WTC11 (cell line): ENCODE measurements at regions of chr4 and their contacts with region 1.

Region 1: DNA sequence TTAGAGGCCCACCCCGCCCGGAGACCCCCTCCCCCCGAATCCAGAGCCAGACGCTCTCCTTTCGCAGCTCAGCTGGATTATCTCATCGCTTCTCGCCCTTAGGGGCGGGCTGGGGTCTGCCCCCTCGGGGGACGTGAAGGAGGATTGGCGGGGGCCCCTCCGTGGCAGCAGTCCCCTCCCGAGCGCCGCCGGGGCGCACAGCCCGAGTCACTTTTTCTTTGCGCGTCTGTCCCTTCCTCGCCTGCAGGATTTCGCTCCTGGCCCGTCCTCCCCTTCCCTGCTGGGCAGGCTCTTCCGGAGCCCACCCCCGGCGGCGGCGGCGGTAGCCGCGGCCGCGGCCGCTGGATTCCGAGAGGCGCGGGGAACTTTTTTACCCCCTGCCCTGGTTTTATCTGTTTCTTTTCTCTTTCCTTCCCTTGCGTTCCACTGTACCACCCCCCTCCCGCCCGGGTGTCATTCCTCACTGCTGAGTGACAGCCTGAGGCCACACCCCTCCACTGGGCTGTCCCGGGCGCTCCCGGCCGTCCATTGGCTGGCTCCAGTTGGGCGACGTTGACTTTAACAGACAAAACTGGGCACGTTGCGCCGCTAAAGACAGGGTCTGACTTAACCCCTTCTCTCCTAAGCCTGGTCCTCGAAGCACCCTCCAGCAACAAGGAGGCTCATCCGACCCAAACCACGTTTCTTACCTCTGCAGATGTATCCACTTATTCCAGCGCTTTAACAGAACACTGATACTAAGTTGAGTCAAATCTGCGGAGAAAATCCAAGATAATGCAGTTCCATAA is 492 bp upstream of the NKX3-2 start:
- DNase-seq: peak; percentile 95
- ATAC-seq: peak; percentile 69
- H3K4me3 Mint-ChIP-seq: peak overlapping the region; percentile 83
- H3K27ac Mint-ChIP-seq: no peak overlapping the region
- H3K4me1 Mint-ChIP-seq: peaks cover 52% of the 10 kb centered on the region
- H3K27me3 Mint-ChIP-seq: peaks cover 97% of the 10 kb centered on the region
- CTCF ChIP-seq: no peak

Region 2: GRCh38 chr4:13484122-13484748 is 60.6 kb before region 1 on chr4 and contains the start of gene RAB28:
- CTCF ChIA-PET with region 1: interaction called, 23 read pairs
- POLR2A ChIA-PET with region 1: interaction called, 6 read pairs
- DNase-seq: peak; percentile 91
- ATAC-seq: peak; percentile 92
- H3K4me3 Mint-ChIP-seq: peak within 1 kb of the TSS; percentile 91
- H3K27ac Mint-ChIP-seq: peak within 1 kb of the TSS; percentile 99
- H3K4me1 Mint-ChIP-seq: peaks cover 20% of the 10 kb centered on the region
- H3K27me3 Mint-ChIP-seq: peaks cover 16% of the 10 kb centered on the region
- CTCF ChIP-seq: no peak
- total RNA-seq, gene RAB28: 17.1 to 18.4 TPM (median 17.4 TPM) in 3 replicates

Region 3: DNA sequence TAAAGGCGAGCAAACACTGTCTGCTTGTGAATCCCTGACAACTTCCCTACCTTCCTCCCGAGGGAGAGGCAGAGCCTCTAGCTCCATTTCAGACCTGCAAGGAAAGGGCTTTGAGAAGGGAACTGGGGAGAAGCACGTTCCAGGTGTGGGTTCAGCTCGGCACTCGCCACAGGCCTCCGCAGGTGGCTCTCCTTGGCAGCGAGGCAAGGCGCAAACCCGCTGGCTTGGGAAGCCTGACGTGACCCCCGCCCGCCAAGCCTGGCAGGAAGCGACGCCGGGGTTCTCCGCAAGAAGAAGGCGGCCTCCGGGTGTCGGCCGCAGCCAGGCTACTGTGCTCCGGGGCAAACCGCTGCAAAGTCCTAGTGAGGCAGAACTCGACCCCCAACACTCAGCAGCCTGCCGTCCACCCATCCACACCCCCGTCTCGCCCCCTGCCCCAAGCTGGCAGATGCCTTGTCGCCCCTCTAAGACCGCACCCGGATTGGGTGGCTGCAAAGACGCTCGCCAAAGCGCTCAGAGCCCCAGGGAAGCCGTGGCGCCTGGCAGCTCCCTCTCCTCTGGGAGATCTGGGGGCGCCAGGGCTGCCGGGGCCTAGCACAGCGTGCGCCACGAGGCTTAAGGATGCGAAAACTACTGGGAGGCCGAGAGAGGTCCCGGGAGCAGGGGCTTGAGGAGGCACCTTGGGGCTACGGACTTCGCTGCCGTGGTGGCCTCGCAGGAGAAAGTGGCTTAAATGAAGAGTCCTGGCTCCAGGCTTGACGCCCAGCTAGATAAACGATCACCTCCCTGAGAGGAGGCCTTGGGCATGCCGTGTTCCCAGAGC is 22.3 kb before region 1 on chr4:
- CTCF ChIA-PET with region 1: interaction called, 69 read pairs
- POLR2A ChIA-PET with region 1: interaction called, 5 read pairs
- DNase-seq: peak; percentile 65
- ATAC-seq: peak; percentile 65
- H3K4me3 Mint-ChIP-seq: peak overlapping the region; percentile 62
- H3K27ac Mint-ChIP-seq: no peak overlapping the region
- H3K4me1 Mint-ChIP-seq: peaks cover 49% of the 10 kb centered on the region
- H3K27me3 Mint-ChIP-seq: peaks cover 78% of the 10 kb centered on the region
- CTCF ChIP-seq: no peak

Region 4: DNA sequence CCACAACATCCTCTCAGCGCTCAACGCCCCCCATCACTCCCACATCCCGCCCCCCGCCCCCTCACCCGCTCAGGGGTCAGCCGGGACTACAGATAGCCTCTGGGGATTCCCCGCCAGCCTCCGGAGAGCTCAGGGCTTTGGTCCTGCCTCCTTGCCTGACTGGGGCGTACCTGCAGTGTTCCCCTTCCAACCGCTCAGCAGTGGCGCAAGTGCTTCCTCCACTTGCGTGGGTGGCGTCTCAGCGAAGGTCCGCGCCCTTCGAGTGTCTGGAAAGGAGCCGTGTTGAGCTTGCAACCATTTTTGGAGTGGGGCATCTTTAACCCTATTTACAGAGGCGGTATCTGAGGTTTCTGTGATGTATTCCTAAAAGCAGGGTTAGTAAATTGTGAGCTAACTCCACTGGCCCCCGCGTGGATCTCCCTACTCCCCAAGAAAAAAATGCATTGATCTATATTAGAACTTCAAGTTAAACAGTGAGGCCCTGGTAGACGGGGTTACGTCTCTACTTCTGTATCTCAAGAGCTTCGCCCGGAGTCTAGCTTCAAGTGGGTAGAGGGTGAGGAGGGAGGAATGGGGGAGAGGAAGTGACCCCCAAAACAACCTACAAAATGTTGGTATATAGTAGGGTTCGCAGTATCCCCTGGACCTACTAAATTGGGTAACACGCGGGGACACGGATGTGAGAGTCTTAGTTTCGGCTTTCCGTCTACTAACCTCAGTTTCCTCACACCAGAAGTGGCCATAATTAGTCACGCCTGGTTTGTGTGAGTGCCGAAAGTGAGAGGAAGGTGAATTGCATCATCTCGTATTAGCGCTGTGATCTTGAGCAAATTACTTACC is 16.6 kb before region 1 on chr4:
- CTCF ChIA-PET with region 1: interaction called, 69 read pairs
- POLR2A ChIA-PET with region 1: interaction called, 3 read pairs
- DNase-seq: no peak
- ATAC-seq: no peak
- H3K4me3 Mint-ChIP-seq: peak overlapping the region; percentile 50
- H3K27ac Mint-ChIP-seq: no peak overlapping the region
- H3K4me1 Mint-ChIP-seq: peaks cover 72% of the 10 kb centered on the region
- H3K27me3 Mint-ChIP-seq: peaks cover 100% of the 10 kb centered on the region
- CTCF ChIP-seq: no peak

Region 5: GRCh38 chr4:13597141-13597540 is 52.3 kb after region 1 on chr4:
- CTCF ChIA-PET with region 1: no interaction called
- POLR2A ChIA-PET with region 1: no interaction called
- DNase-seq: no peak
- ATAC-seq: no peak
- H3K4me3 Mint-ChIP-seq: no peak overlapping the region
- H3K27ac Mint-ChIP-seq: no peak overlapping the region
- H3K4me1 Mint-ChIP-seq: no peaks in the 10 kb centered on the region
- H3K27me3 Mint-ChIP-seq: no peaks in the 10 kb centered on the region
- CTCF ChIP-seq: no peak